Cardiac septum (tissue), 1 donor: ENCODE measurements at regions of chr14 and their contacts with region 1.

Region 1: GRCh38 chr14:68788996-68789820 is 3.7 kb downstream of the ZFP36L1 start:
- DNase-seq: peak; percentile 90

Region 2: DNA sequence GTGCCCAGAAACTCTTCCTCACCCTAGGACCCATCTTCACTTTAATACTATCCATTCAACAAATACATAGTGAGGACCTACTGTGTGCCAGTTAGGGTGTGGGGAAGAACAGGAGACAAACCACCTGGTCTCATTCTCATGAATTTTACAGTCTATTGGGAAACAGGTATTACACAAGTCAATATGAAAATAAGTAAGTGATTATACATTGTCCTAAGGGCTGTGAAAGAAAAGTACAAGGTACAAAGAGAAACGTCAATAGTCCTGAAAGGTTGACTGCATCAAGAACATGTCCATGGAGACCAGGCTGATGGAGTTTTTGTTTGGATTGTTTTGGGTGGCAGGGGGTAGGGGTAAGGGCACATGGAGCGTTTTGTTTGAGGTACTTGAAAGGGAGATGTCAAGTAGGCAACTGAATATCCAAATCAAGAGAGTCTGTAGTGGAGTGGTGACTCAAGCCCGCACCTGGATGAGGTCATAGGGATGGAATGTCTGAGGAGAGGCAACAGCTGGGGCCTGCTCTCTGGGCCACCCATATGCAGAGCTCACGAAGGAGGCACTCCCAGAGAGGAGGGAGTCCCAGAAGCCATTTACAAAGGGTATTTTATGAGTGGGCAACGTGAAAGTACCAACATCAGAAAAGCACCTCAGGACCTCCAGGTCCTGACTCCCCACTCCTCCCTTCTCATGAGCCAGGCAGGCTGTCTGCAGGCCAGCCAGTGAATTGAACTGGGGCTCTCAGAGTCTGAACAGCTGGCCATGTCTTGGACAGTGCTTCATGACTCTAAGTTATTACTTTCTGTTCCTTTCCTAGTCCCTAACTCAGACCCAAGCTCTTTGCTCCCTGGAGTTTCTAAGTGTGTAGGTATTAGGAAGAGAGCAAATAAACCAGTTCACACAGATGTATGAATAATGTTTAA is 268.3 kb before region 1 on chr14:
- intact Hi-C with region 1: loop called (anchors 5 kb)
- DNase-seq: no peak

Region 3: DNA sequence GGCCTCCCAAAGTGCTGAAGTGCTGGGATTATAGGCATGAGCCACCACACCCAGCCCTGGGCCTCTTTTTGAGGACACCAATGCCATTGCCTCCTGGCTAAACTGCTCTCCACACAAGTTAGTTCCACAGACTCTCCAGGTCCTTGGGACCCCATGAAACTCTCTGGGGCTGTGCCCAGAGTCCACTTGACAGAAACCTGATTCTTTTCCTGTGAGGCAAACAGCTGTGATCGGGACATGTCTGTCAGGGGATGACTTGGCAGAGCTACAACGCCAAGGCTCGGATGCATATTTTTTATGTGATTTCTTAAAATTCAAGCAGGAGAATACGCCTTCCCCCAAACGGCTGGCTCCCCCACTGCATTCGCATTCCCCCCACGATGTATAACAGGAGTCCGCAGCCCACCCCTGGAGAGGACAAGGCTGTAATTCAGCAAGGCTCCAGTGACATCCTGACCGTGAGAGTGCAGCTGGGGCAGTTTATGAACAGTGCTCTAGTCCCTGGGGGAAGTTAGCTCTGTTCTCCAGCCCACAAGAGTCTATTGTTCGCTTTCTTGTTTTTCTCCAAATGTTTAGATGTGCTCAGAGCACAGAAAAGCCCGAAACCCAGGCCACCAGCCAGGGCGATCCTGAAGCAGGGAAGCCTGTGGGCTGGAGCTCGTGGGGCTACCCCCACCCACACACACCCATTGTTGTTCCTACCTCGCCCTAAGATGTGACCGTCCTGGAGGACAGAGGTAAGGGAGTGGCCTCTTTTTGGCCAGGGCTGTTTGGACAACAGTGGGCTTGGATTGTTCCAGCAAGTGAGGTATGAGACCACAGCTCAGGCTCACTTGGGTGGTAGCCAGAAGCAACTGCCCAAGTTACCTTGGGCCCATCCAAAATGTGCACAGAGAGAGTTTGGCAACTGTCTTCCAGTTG is 155.9 kb before region 1 on chr14:
- intact Hi-C with region 1: loop called (anchors 5 kb)
- DNase-seq: no peak

Region 4: GRCh38 chr14:68676511-68676943 is 112.7 kb before region 1 on chr14:
- intact Hi-C with region 1: no loop called
- DNase-seq: peak; percentile 35

Region 5: GRCh38 chr14:68723808-68724268 is 65.4 kb before region 1 on chr14:
- intact Hi-C with region 1: no loop called
- DNase-seq: no peak

Region 6: DNA sequence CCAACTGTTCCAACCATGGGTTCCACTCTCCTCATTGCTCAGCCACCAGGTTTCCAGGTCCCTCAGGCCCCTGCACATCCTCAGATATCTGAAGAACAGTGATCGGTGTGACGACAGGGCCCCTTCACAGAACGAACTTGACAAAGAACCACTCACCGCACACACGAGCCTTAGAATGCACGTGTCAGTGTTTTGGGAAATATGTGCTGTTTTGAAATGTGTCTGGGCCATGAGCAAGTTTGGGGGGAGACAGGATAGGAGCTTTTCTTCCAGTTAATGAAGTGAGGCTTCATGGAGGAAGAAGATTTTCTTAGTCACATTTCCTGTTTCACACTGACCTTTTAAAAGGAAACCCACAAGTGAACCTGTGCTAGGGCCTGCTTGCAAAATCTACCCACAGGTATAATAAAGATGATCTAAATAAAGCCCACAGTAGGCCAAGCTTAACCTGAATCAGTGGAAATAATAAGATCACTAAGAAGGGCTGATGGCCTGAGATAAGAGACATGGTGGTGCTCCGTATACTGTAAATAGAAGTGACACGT is 54.9 kb before region 1 on chr14:
- intact Hi-C with region 1: loop called (anchors 5 kb)
- DNase-seq: peak; percentile 83